Spleen (tissue), 13 donors: ENCODE measurements at regions of chr17 and their contacts with region 1.

Region 1: GRCh38 chr17:48351831-48352332 is 78.1 kb downstream of the SKAP1 start:
- DNase-seq: no peak
- H3K4me3 ChIP-seq: no peak overlapping the region
- H3K27ac ChIP-seq: no peak overlapping the region
- H3K4me1 ChIP-seq: peaks cover 0 to 8% (median 4%) of the 10 kb centered on the region in 6 donors
- H3K27me3 ChIP-seq: no peaks in the 10 kb centered on the region
- CTCF ChIP-seq: peak; percentile 10 to 75 (median 61)
- POLR2A ChIP-seq: no peak

Region 2: DNA sequence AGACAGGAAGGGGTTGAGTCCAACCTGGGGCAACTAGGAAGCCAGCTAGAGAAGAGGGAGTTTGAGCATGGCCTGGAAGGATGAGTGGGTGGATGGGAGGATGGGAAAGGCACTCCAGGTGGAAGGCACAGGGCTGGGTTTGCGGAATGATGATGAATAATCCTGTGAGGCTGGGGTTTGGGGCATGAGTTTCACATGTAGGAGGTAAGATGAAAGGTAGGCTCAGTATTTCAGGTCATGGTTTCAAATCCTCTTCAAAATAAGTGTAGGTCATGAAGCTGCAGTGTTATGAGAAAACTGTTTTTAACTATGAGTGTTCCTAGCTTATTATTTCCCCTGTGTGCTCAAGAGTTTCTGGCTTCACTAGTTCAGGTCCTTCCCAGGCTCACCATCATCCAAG is 52.1 kb before region 1 on chr17:
- intact Hi-C with region 1: no loop called
- DNase-seq: no peak
- H3K4me3 ChIP-seq: no peak overlapping the region
- H3K27ac ChIP-seq: peak overlapping the region in 1 of 8 donors; percentile 7
- H3K4me1 ChIP-seq: peaks cover 0 to 21% (median 14%) of the 10 kb centered on the region in 6 donors
- H3K27me3 ChIP-seq: no peaks in the 10 kb centered on the region
- CTCF ChIP-seq: no peak
- POLR2A ChIP-seq: no peak

Region 3: GRCh38 chr17:48413613-48414405 is 61.9 kb after region 1 on chr17:
- intact Hi-C with region 1: no loop called
- DNase-seq: no peak
- H3K4me3 ChIP-seq: no peak overlapping the region
- H3K27ac ChIP-seq: peak overlapping the region in 7 of 8 donors; percentile 16 to 75 (median 44)
- H3K4me1 ChIP-seq: peaks cover 0 to 77% (median 16%) of the 10 kb centered on the region in 6 donors
- H3K27me3 ChIP-seq: peaks cover 0 to 63% (median 23%) of the 10 kb centered on the region in 7 donors
- CTCF ChIP-seq: no peak
- POLR2A ChIP-seq: no peak

Region 4: DNA sequence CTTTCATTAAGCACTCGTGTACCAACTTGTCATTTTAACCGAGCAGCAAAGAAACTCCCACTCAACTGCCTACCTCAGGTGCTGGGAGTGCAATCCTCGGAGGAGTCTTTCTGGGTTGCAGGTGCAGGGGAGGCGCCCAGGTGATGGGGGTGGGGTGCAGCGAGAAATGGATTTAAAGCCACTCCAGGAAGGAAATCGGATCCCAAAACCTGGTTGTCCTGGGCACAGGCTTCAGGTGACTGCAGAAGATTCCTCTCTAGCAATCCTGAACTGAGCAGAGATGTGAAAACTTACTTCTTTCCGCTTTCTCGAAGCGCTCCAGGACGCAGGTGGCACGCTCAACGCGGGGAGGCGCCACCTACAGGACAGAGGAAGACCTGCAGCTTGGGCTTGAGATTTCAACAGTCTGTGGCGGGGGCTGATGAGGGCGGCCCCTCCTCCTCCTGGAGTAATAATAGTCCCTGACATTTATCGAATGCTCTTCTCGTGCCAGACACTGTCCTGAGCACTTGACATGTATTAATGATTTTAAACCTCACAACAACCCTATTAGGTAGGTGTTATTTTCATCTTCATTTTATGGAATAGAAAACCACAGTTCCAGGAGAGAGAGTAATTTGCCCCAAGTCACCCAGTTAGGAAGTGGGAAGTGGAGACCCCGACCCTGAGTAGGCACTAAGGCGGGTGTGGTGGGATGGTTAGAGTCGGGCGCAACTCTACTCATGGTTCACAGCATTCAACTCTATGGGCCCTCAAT is 105.4 kb after region 1 on chr17:
- intact Hi-C with region 1: loop called (anchors 5 kb)
- DNase-seq: peak; percentile 91
- H3K4me3 ChIP-seq: peak overlapping the region in 1 of 8 donors; percentile 49
- H3K27ac ChIP-seq: no peak overlapping the region
- H3K4me1 ChIP-seq: peaks cover 0 to 54% (median 28%) of the 10 kb centered on the region in 6 donors
- H3K27me3 ChIP-seq: peaks cover 0 to 35% (median 0%) of the 10 kb centered on the region in 7 donors
- CTCF ChIP-seq: peak; percentile 81 to 95 (median 91)
- POLR2A ChIP-seq: no peak

Region 5: GRCh38 chr17:48593840-48594537 is 242.1 kb after region 1 on chr17:
- intact Hi-C with region 1: loop called (anchors 5 kb)
- DNase-seq: peak; percentile 92
- H3K4me3 ChIP-seq: peak overlapping the region in 5 of 8 donors; percentile 14 to 67 (median 36)
- H3K27ac ChIP-seq: peak overlapping the region in 6 of 8 donors; percentile 38 to 85 (median 78)
- H3K4me1 ChIP-seq: peaks cover 19 to 91% (median 58%) of the 10 kb centered on the region in 6 donors
- H3K27me3 ChIP-seq: peaks cover 5 to 100% (median 87%) of the 10 kb centered on the region in 7 donors
- CTCF ChIP-seq: peak; percentile 86 to 96 (median 91)
- POLR2A ChIP-seq: no peak